ENCODE measurements at regions of chr7 and their contacts with region 1.

Region 1: DNA sequence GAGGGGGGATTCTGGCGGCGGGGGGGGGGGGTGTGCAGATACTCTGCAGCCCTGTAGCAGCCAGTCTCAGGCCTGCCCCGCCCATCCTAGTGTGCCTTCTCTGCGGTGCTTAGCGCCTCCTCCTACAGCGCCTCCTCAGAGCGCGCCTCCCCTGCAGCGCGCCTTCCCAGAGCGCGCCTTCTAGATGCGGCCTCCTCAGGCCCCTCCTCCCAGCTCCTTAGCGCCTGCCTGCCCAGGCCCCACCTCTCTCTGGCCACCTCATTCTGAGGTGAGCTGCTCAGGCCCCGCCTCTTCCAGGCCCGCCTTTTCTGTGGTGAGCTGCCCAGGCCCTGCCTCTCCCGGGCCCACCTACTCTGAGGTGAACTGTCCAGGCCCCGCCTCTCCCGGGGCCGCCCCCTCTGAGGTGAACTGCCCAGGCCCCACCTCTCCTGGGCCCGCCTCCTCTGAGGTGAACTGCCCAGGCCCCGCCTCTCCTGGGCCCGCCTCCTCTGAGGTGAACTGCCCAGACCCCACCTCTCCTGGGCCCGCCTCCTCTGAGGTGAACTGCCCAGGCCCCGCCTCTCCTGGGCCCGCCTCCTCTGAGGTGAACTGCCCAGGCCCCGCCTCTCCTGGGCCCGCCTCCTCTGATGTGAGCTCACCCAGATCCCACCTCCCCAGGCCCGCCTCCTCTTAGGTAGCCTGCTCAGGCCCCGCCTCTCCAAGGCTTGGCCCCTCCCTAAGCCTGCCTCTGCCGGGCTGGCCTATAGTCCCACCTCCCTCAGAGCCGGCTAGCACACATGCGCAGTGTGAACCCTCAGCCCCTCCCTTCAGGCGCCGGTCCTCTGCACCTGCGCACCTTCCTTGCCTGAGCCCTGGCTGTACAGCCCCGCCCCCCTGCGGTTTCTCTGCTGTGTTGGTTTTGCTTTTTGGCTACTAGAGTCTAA is 2.1 kb upstream of the SGCE start:
- DNase-seq: peak; percentile 99
- ATAC-seq: peak; percentile 84
- H3K4me3 ChIP-seq: peak overlapping the region; percentile 96
- H3K27ac ChIP-seq: no peak overlapping the region
- H3K4me1 ChIP-seq: peaks cover 18% of the 10 kb centered on the region
- H3K27me3 ChIP-seq: no peaks in the 10 kb centered on the region
- CTCF ChIP-seq: no peak

Region 2: DNA sequence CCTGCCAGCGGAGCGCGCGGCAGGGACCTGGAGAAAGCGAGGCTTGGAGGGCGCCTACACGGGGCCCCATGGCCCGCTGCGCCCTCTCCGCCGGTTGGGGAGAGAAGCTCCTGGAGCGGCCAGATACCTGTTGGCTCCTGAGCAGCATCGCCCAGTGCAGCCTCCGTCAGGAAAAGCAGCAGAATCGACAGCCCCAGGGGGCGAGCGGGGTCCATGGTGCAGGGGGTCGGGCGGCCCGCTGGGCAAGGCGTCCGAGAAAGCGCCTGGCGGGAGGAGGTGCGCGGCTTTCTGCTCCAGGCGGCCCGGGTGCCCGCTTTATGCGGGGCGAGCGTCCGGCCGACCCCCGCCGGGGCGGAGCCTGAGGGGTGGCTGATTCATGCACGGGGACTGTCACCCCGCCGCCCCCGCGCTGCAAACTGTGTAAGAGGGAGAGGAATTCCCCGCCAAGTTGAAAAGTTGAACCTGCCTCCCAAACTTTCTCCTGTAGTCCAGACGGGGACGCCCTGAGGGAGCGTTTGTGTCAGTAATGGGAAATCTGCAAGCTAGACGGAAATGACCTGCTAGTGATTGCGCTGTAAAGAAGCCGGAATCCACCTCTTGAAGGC is 767.5 kb before region 1 on chr7 and contains the start of gene TFPI2:
- CTCF ChIA-PET with region 1: no interaction called
- POLR2A ChIA-PET with region 1: interaction called, 29 read pairs
- intact Hi-C with region 1: no loop called
- DNase-seq: peak; percentile 87
- ATAC-seq: peak; percentile 73
- H3K4me3 ChIP-seq: peak within 1 kb of the TSS; percentile 83
- H3K27ac ChIP-seq: peak within 1 kb of the TSS; percentile 90
- H3K4me1 ChIP-seq: peaks cover 15% of the 10 kb centered on the region
- H3K27me3 ChIP-seq: no peaks in the 10 kb centered on the region
- CTCF ChIP-seq: peak; percentile 38; the same call in 1 of the 2 replicates
- total RNA-seq, gene TFPI2: 53.1 and 62.6 TPM in 2 replicates

Region 3: GRCh38 chr7:94466516-94466915 is 191.5 kb before region 1 on chr7:
- CTCF ChIA-PET with region 1: interaction called, 13 read pairs
- POLR2A ChIA-PET with region 1: interaction called, 5 read pairs
- intact Hi-C with region 1: no loop called
- DNase-seq: peak; percentile 57
- ATAC-seq: peak; percentile 88
- H3K4me3 ChIP-seq: no peak overlapping the region
- H3K27ac ChIP-seq: no peak overlapping the region
- H3K4me1 ChIP-seq: peaks cover 13% of the 10 kb centered on the region
- H3K27me3 ChIP-seq: no peaks in the 10 kb centered on the region
- CTCF ChIP-seq: no peak

Region 4: DNA sequence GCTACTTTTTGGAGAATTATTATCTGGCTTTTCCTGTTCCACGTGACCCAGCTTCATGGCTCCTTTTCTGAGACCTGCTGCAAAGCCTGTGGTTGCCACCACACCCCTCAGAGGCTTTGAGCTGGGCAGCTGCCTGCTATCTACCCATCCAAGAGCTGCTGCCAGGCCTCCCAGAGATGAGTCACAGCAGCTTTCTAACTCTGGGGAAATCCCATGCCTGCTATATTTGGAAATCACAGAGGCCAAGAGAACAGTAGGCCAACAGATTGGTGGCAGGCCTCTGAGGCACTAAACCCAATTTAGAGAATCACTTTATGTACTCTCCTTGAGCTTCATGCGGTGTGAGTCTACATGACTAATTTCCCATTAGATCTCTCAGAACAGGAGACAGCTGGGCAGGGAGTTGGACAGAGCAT is 37.3 kb before region 1 on chr7:
- CTCF ChIA-PET with region 1: interaction called, 18 read pairs
- POLR2A ChIA-PET with region 1: interaction called, 5 read pairs
- intact Hi-C with region 1: loop called (anchors 1 kb)
- DNase-seq: peak; percentile 94
- ATAC-seq: peak; percentile 98
- H3K4me3 ChIP-seq: no peak overlapping the region
- H3K27ac ChIP-seq: peak overlapping the region; percentile 80
- H3K4me1 ChIP-seq: peaks cover 21% of the 10 kb centered on the region
- H3K27me3 ChIP-seq: no peaks in the 10 kb centered on the region
- CTCF ChIP-seq: no peak

Region 5: GRCh38 chr7:94823952-94824351 is 165.9 kb after region 1 on chr7:
- CTCF ChIA-PET with region 1: no interaction called
- POLR2A ChIA-PET with region 1: no interaction called
- intact Hi-C with region 1: loop called (anchors 1 kb)
- DNase-seq: peak; percentile 77
- ATAC-seq: peak; percentile 97
- H3K4me3 ChIP-seq: no peak overlapping the region
- H3K27ac ChIP-seq: no peak overlapping the region
- H3K4me1 ChIP-seq: peaks cover 11% of the 10 kb centered on the region
- H3K27me3 ChIP-seq: no peaks in the 10 kb centered on the region
- CTCF ChIP-seq: no peak

Region 6: GRCh38 chr7:95104739-95105138 is 446.7 kb after region 1 on chr7:
- CTCF ChIA-PET with region 1: no interaction called
- POLR2A ChIA-PET with region 1: interaction called, 7 read pairs
- intact Hi-C with region 1: loop called (anchors 10 kb)
- DNase-seq: peak; percentile 76
- ATAC-seq: peak; percentile 60
- H3K4me3 ChIP-seq: no peak overlapping the region
- H3K27ac ChIP-seq: peak overlapping the region; percentile 43
- H3K4me1 ChIP-seq: peaks cover 37% of the 10 kb centered on the region
- H3K27me3 ChIP-seq: no peaks in the 10 kb centered on the region
- CTCF ChIP-seq: no peak

Region 7: GRCh38 chr7:95476904-95477594 is 819.0 kb after region 1 on chr7:
- CTCF ChIA-PET with region 1: no interaction called
- POLR2A ChIA-PET with region 1: interaction called, 4 read pairs
- intact Hi-C with region 1: loop called (anchors 2 kb)
- DNase-seq: peak; percentile 76
- ATAC-seq: peak; percentile 48
- H3K4me3 ChIP-seq: no peak overlapping the region
- H3K27ac ChIP-seq: no peak overlapping the region
- H3K4me1 ChIP-seq: no peaks in the 10 kb centered on the region
- H3K27me3 ChIP-seq: no peaks in the 10 kb centered on the region
- CTCF ChIP-seq: peak; percentile 86

Measured in PC-3 (cell line).